Heart left ventricle (tissue), 16 donors: ENCODE measurements at regions of chr4 and their contacts with region 1.

Region 1: GRCh38 chr4:56062603-56063031 is 113.9 kb downstream of the CEP135 start:
- DNase-seq: no peak
- ATAC-seq: no peak
- H3K4me3 ChIP-seq: no peak overlapping the region
- H3K27ac ChIP-seq: no peak overlapping the region
- H3K4me1 ChIP-seq: no peaks in the 10 kb centered on the region
- H3K27me3 ChIP-seq: peaks cover 0 to 7% (median 0%) of the 10 kb centered on the region in 9 donors
- CTCF ChIP-seq: no peak
- POLR2A ChIP-seq: no peak

Region 2: DNA sequence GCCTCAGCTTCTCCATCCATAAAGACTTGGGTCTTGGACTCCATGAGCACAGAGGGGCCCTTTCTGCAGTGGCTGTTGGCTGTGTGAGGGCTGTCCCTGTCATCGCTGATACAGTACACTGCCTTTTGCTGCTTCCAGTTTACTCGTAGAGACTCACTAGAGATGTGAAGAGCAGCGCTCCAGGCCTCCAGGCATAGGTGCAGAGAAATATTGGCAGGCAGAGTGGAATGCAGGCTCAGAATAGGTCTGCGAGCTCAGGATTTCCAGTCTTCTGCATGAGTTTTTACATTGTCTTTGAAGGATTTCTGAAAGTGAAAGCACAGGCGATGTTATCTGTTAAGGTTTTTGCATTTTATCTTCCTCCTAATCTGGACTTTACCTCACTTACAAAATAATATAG is 227.3 kb after region 1 on chr4:
- intact Hi-C with region 1: loop called in 1 of 10 experiments (anchors 10 kb)
- DNase-seq: no peak
- ATAC-seq: peak in 3 of 4 donors; percentile 46 to 63 (median 50)
- H3K4me3 ChIP-seq: peak overlapping the region in 1 of 12 donors; percentile 10
- H3K27ac ChIP-seq: no peak overlapping the region
- H3K4me1 ChIP-seq: no peaks in the 10 kb centered on the region
- H3K27me3 ChIP-seq: no peaks in the 10 kb centered on the region
- CTCF ChIP-seq: no peak
- POLR2A ChIP-seq: no peak

Region 3: GRCh38 chr4:56467284-56468096 is 404.9 kb after region 1 on chr4 and contains the start of gene SRP72:
- intact Hi-C with region 1: no loop called
- DNase-seq: peak; percentile 89 to 92 (median 91)
- ATAC-seq: peak; percentile 97 to 99 (median 98)
- H3K4me3 ChIP-seq: peak within 1 kb of the TSS; percentile 66 to 97 (median 90)
- H3K27ac ChIP-seq: peak within 1 kb of the TSS; percentile 74 to 92 (median 87)
- H3K4me1 ChIP-seq: peaks cover 3 to 54% (median 35%) of the 10 kb centered on the region in 12 donors
- H3K27me3 ChIP-seq: no peaks in the 10 kb centered on the region
- CTCF ChIP-seq: peak in 1 of 12 donors; percentile 14
- POLR2A ChIP-seq: peak in 1 of 2 donors; percentile 51
- total RNA-seq, gene SRP72: 35.1 to 66.8 (median 41.7) TPM